Heart right ventricle (tissue), 16 donors: ENCODE measurements at regions of chr10 and their contacts with region 1.

Region 1: DNA sequence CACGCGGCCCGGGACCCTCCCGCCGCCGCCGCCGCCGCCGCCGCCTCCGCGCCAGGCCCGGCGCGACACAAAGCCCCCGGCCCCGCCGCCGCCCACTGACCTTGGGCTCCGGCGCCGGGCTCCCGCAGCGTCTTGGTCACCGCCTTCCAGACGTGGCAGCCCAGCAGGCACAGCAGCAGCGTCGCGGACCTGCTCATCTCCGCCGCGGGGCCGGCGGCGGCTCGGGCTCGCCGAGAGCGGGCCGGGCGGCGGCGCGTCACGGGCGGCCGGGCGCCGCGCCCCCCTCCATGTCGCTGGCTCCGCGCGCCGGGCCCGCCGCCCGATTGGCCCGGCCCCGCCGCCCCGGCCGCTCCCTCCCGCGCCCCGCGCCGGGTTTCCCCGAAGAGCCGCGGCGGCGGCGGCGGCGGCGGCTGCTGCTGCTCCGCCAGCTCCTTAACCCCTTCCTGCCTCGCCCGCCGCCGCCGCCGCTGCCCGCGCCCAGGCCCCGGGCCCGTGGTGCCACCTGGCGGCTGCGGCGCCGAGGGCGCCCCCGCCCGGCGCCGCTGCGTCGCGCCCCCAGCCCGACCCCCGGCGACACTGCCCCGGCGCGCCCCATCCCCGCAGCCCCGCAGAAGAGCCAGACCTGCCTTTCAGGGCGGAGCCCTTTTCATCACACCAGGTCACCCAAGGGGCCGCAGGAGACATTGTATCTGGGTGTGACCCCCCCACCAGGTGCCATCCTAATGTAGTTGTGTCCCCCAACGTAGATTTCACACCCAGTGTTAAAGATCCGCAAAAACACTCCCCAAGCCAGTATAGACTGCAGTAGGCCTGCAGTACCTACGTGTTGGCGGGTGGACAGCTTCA is at the start of gene FAM171A1:
- DNase-seq: peak; percentile 42 to 68
- ATAC-seq: peak; percentile 35 to 86 (median 71)
- H3K4me3 ChIP-seq: peak within 1 kb of the TSS; percentile 60 to 82 (median 72)
- H3K27ac ChIP-seq: peak within 1 kb of the TSS in 8 of 10 donors; percentile 59 to 81 (median 76)
- H3K4me1 ChIP-seq: peaks cover 0 to 42% (median 15%) of the 10 kb centered on the region in 9 donors
- H3K27me3 ChIP-seq: peaks cover 0 to 69% (median 0%) of the 10 kb centered on the region in 7 donors
- CTCF ChIP-seq: peak in 6 of 9 donors; percentile 3 to 48 (median 14)
- total RNA-seq, gene FAM171A1: 3.5 to 10.5 (median 6.8) TPM

Region 2: DNA sequence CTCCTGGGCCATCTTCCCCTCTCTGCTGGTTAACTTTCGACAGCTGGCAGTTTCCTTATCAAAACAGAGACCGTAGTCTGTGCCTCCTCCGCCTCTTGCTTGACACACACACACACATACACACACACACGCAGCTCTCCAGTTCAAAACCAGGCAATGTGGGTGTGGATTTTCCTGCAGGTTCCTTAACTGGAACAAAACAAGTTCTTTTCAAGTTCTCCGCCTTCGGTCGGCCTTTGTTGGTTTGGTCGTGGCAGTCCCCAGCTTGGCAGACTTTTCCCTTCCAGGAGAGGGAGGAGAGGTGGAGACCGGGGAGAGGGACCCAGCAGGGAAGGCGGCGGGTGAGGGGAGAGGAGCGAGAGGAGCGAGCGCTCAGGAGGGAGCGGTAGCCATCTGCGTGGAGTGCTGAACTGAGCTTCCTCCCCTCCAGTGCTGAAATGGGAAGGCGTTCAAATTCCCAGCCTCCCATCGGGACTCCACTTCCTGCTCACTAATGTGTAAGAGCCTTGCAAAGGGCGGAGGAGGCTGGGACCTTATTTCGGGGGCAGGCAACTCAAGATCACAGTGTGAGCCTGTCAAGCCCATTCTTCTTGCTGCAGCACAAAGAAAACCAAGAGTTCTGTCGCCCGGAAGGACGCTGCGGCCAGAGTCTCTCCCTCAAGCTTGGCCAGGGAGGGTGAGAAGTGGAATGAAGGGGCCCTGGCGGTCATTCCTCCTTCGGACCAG is 1663.8 kb before region 1 on chr10:
- intact Hi-C with region 1: no loop called
- DNase-seq: peak; percentile 80 to 94
- ATAC-seq: peak; percentile 86 to 93 (median 90)
- H3K4me3 ChIP-seq: peak overlapping the region; percentile 7 to 70 (median 63)
- H3K27ac ChIP-seq: peak overlapping the region; percentile 44 to 91 (median 84)
- H3K4me1 ChIP-seq: peaks cover 11 to 90% (median 76%) of the 10 kb centered on the region in 9 donors
- H3K27me3 ChIP-seq: no peaks in the 10 kb centered on the region
- CTCF ChIP-seq: peak in 1 of 9 donors; percentile 17

Region 3: GRCh38 chr10:14056610-14057332 is 1314.3 kb before region 1 on chr10:
- intact Hi-C with region 1: no loop called
- DNase-seq: no peak
- ATAC-seq: peak in 1 of 8 donors; percentile 47
- H3K4me3 ChIP-seq: no peak overlapping the region
- H3K27ac ChIP-seq: no peak overlapping the region
- H3K4me1 ChIP-seq: no peaks in the 10 kb centered on the region
- H3K27me3 ChIP-seq: no peaks in the 10 kb centered on the region
- CTCF ChIP-seq: no peak

Region 4: GRCh38 chr10:15088428-15089261 is 282.4 kb before region 1 on chr10 and contains the start of gene ACBD7:
- intact Hi-C with region 1: no loop called
- DNase-seq: peak; percentile 57 to 80
- ATAC-seq: peak; percentile 92 to 99 (median 94)
- H3K4me3 ChIP-seq: peak within 1 kb of the TSS; percentile 51 to 69 (median 60)
- H3K27ac ChIP-seq: no peak within 1 kb of the TSS
- H3K4me1 ChIP-seq: peaks cover 0 to 20% (median 16%) of the 10 kb centered on the region in 9 donors
- H3K27me3 ChIP-seq: peaks cover 0 to 7% (median 0%) of the 10 kb centered on the region in 7 donors
- CTCF ChIP-seq: peak; percentile 23 to 68 (median 51)
- total RNA-seq, gene ACBD7: 0.23 TPM in 1 of 10 donors, not detected in the others

Region 5: GRCh38 chr10:15209827-15210509 is 161.1 kb before region 1 on chr10:
- intact Hi-C with region 1: loop called in 9 of 10 experiments (anchors 2 to 5 kb)
- DNase-seq: peak; percentile 60 to 86
- ATAC-seq: peak; percentile 81 to 94 (median 88)
- H3K4me3 ChIP-seq: no peak overlapping the region
- H3K27ac ChIP-seq: no peak overlapping the region
- H3K4me1 ChIP-seq: peaks cover 0 to 15% (median 5%) of the 10 kb centered on the region in 9 donors
- H3K27me3 ChIP-seq: peaks cover 0 to 3% (median 0%) of the 10 kb centered on the region in 7 donors
- CTCF ChIP-seq: peak; percentile 81 to 92 (median 88)

Region 6: DNA sequence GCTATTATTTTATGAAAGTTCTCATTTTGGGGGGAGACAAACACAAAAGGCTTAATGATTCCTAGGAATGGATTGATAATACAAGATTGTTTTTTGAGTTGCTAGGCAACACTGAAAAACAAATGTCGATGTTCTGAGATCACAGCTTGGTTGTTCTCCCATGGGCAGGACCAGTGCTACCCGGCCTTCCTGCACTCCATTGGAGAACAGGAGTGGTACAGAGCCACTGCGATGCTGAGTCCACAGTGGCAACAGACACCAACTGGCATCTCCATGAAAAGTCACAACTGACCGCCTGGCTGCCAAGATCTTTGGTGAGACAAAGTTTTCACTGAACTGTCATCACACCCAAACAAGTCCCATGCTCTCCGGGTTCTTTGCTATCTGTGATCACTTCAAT is 133.7 kb before region 1 on chr10:
- intact Hi-C with region 1: no loop called
- DNase-seq: peak in 1 of 2 donors; percentile 15
- ATAC-seq: peak in 7 of 8 donors; percentile 79 to 89 (median 84)
- H3K4me3 ChIP-seq: no peak overlapping the region
- H3K27ac ChIP-seq: peak overlapping the region in 6 of 10 donors; percentile 3 to 36 (median 26)
- H3K4me1 ChIP-seq: peaks cover 0 to 22% (median 4%) of the 10 kb centered on the region in 9 donors
- H3K27me3 ChIP-seq: no peaks in the 10 kb centered on the region
- CTCF ChIP-seq: no peak

Region 7: DNA sequence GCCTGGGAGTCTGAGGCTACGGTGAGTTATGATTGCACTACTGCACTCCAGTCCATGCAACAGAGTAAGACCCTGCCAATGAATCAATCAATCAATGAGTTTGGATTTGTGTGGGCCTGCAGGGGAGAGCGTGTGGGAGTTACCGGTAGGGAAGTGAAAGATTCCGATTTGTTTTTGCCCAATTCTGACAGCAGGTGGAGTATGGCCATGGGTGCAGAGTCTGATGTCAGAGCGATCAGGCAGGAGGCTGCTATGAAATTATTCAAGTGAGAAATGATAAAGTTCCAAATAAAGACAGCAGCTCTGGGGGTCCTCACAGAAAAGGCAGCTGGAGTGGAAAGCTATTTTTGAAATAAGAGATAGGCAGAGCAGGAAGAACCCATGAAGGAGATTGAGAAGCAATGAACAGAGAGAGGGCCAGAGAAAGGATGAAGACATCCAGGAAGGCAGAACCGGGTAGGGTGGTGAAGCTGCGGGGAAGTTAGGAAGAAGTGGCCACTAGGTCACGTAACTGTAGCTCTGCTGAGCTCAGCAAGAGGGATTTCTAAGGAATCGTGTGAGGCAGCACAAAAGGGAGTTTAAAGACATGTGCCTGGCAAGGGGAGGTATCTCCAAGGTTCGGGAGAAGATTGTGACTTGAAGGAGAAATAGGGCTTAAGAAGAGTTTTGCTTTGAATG is 108.9 kb before region 1 on chr10:
- intact Hi-C with region 1: loop called in 6 of 10 experiments (anchors 2 to 5 kb)
- DNase-seq: peak in 1 of 2 donors; percentile 27
- ATAC-seq: peak in 7 of 8 donors; percentile 53 to 79 (median 64)
- H3K4me3 ChIP-seq: no peak overlapping the region
- H3K27ac ChIP-seq: no peak overlapping the region
- H3K4me1 ChIP-seq: peaks cover 0 to 11% (median 0%) of the 10 kb centered on the region in 9 donors
- H3K27me3 ChIP-seq: no peaks in the 10 kb centered on the region
- CTCF ChIP-seq: peak; percentile 16 to 60 (median 35)